Activated CD4-positive, alpha-beta T cell treated with anti-CD3 and anti-CD28 coated beads for 36 hours (primary cell): ENCODE measurements at regions of chr18 and their contacts with region 1.

Region 1: GRCh38 chr18:6297875-6298274 is 116.8 kb downstream of the L3MBTL4 start:
- DNase-seq: no peak
- ATAC-seq: no peak
- H3K4me3 Mint-ChIP-seq: no peak overlapping the region
- H3K27ac Mint-ChIP-seq: no peak overlapping the region
- H3K4me1 Mint-ChIP-seq: no peaks in the 10 kb centered on the region
- H3K27me3 Mint-ChIP-seq: no peaks in the 10 kb centered on the region

Region 2: GRCh38 chr18:6281874-6282273 is 16.0 kb before region 1 on chr18:
- CTCF ChIA-PET with region 1: no interaction called
- POLR2A ChIA-PET with region 1: no interaction called
- intact Hi-C with region 1: no loop called
- DNase-seq: no peak
- ATAC-seq: no peak
- H3K4me3 Mint-ChIP-seq: no peak overlapping the region
- H3K27ac Mint-ChIP-seq: no peak overlapping the region
- H3K4me1 Mint-ChIP-seq: no peaks in the 10 kb centered on the region
- H3K27me3 Mint-ChIP-seq: no peaks in the 10 kb centered on the region

Region 3: DNA sequence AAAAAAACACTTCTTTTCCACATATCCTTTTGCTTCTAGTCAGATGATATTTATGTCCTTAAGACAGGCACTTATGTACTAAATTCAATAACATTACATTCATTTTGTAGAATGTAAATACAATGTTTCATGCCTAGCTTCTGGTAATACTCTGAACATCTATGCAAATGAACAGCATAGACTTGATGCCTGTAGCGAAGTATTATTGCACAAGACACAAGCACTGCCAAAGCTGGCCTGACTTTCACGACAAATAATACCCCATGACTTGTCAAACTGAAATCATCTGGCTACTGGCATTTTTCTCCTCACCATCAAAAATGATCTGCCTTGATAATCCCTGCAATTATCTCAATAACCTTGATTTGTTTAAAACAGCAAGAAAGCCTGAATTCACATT is 15.5 kb after region 1 on chr18:
- CTCF ChIA-PET with region 1: no interaction called
- POLR2A ChIA-PET with region 1: no interaction called
- intact Hi-C with region 1: loop called in 1 of 2 experiments (anchors 1 kb)
- DNase-seq: no peak
- ATAC-seq: no peak
- H3K4me3 Mint-ChIP-seq: no peak overlapping the region
- H3K27ac Mint-ChIP-seq: no peak overlapping the region
- H3K4me1 Mint-ChIP-seq: no peaks in the 10 kb centered on the region
- H3K27me3 Mint-ChIP-seq: no peaks in the 10 kb centered on the region